ENCODE measurements at regions of chr2 and their contacts with region 1.

Region 1: GRCh38 chr2:136384531-136385303 is 266.8 kb upstream of the CXCR4 start:
- DNase-seq: peak; percentile 48
- H3K4me3 Mint-ChIP-seq: no peak overlapping the region
- H3K27ac Mint-ChIP-seq: peak overlapping the region; percentile 97
- H3K4me1 Mint-ChIP-seq: peaks cover 47% of the 10 kb centered on the region
- H3K27me3 Mint-ChIP-seq: no peaks in the 10 kb centered on the region

Region 2: GRCh38 chr2:135052042-135052876 is 1332.5 kb before region 1 on chr2 and contains the start of gene RAB3GAP1:
- intact Hi-C with region 1: loop called (anchors 2 kb)
- DNase-seq: peak; percentile 91
- H3K4me3 Mint-ChIP-seq: peak within 1 kb of the TSS; percentile 96
- H3K27ac Mint-ChIP-seq: peak within 1 kb of the TSS; percentile 100
- H3K4me1 Mint-ChIP-seq: peaks cover 47% of the 10 kb centered on the region
- H3K27me3 Mint-ChIP-seq: no peaks in the 10 kb centered on the region
- total RNA-seq, gene RAB3GAP1: 26.6 and 30.8 TPM in 2 replicates

Region 3: GRCh38 chr2:135876066-135876711 is 508.5 kb before region 1 on chr2 and contains the start of gene MCM6:
- intact Hi-C with region 1: loop called (anchors 1 kb)
- DNase-seq: peak; percentile 98
- H3K4me3 Mint-ChIP-seq: peak within 1 kb of the TSS; percentile 95
- H3K27ac Mint-ChIP-seq: peak within 1 kb of the TSS; percentile 92
- H3K4me1 Mint-ChIP-seq: peaks cover 37% of the 10 kb centered on the region
- H3K27me3 Mint-ChIP-seq: no peaks in the 10 kb centered on the region
- total RNA-seq, gene MCM6: 190 and 191 TPM in 2 replicates

Region 4: DNA sequence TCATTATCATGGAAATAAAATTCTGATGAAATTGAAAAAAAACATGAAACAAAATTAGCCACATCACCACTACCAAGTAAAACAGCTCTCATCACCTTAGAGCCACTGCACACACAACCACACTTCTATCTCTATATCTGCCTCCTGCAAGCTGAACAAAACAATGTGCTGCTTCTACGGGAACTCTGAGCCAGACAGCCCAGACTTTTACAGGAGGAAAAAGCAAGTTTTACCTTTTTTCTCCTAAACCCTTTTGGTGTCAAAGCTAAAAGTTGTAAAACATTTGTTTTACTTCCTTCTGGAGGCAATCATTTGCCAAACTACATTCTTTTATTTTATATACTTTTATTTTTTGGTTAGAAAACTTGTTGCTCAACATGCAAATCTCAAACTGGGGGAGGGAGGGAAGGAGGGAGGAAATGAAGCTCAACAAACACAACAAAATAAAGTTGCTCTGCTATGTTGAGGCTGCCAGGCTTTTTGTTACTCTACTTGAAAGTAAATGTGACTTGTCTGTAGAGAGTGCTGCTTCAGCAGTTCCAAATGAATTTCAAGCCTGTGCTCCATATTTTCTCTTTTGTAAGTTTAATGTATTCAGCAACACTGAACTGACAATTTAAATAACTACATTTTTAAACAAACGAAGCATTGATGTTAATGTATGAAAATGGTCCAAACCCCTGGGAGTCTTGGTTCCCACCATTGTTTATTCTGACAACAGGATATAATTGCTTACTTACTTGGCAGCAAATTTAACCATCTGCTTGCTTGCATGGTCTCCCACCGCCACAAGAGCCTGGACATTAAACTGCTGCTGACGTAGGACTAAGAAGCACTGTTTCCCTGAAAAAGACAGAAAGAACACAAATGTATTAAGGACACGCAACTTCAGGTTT is 423.8 kb before region 1 on chr2:
- intact Hi-C with region 1: loop called (anchors 1 kb)
- DNase-seq: peak; percentile 32
- H3K4me3 Mint-ChIP-seq: peak overlapping the region; percentile 66
- H3K27ac Mint-ChIP-seq: peak overlapping the region; percentile 96
- H3K4me1 Mint-ChIP-seq: peaks cover 57% of the 10 kb centered on the region
- H3K27me3 Mint-ChIP-seq: no peaks in the 10 kb centered on the region

Region 5: GRCh38 chr2:136117909-136118818 is 266.6 kb before region 1 on chr2 and contains the start of gene CXCR4:
- intact Hi-C with region 1: loop called (anchors 1 kb)
- DNase-seq: peak; percentile 81
- H3K4me3 Mint-ChIP-seq: peak within 1 kb of the TSS; percentile 97
- H3K27ac Mint-ChIP-seq: peak within 1 kb of the TSS; percentile 96
- H3K4me1 Mint-ChIP-seq: peaks cover 49% of the 10 kb centered on the region
- H3K27me3 Mint-ChIP-seq: peaks cover 21% of the 10 kb centered on the region
- total RNA-seq, gene CXCR4: 140 and 144 TPM in 2 replicates

Region 6: DNA sequence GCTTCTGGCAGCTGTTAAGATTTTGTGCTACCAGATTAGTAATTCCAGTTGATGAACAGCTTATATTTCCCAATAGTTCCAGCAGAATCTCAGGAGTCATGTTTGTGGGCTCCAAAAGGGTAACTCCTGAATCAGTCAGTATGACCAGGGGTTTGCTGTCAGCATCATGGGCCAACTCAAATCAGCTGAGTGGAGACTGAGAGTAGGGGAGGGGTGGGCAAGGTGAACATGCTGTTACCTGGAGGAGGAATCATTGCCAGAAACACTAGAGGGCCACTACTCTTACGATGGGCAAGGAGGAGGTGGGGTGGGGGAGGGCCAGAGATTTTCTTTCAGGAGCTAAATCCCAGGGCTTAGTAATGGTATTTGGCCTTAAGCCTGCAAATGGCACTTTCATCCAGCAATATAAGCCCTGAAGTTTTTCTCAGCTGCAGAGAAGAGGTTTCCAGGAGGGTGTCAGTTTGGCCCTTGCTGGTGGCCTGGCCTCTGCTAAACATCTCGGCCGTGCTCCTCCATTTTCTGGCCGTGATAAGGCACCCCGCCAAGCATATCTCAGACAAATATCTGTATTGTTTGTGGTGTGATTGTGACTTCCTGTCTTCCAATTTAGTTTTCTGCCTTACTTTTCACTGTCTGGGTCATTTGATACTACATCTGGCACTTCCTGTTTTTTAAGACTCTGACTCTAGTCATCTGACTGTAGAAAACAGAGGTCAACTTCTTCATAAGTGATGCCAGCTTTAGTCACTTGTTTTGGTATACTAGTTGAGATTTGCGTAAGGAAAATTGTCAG is 146.2 kb before region 1 on chr2:
- intact Hi-C with region 1: loop called (anchors 1 kb)
- DNase-seq: peak; percentile 20
- H3K4me3 Mint-ChIP-seq: no peak overlapping the region
- H3K27ac Mint-ChIP-seq: peak overlapping the region; percentile 88
- H3K4me1 Mint-ChIP-seq: peaks cover 53% of the 10 kb centered on the region
- H3K27me3 Mint-ChIP-seq: no peaks in the 10 kb centered on the region

Measured in activated T-helper 2 cell treated with anti-CD3 and anti-CD28 coated beads, Interferon-gamma antibody, Interleukin-2, Interleukin-4, amounts not matched to agents 10 μg/mL and 5 μg/mL and 100 μg/mL, durations not matched to agents 14 hours and 24 hours and 36 hours (primary cell).